Natural killer cell (primary cell): ENCODE measurements at regions of chr19 and their contacts with region 1.

Region 1: DNA sequence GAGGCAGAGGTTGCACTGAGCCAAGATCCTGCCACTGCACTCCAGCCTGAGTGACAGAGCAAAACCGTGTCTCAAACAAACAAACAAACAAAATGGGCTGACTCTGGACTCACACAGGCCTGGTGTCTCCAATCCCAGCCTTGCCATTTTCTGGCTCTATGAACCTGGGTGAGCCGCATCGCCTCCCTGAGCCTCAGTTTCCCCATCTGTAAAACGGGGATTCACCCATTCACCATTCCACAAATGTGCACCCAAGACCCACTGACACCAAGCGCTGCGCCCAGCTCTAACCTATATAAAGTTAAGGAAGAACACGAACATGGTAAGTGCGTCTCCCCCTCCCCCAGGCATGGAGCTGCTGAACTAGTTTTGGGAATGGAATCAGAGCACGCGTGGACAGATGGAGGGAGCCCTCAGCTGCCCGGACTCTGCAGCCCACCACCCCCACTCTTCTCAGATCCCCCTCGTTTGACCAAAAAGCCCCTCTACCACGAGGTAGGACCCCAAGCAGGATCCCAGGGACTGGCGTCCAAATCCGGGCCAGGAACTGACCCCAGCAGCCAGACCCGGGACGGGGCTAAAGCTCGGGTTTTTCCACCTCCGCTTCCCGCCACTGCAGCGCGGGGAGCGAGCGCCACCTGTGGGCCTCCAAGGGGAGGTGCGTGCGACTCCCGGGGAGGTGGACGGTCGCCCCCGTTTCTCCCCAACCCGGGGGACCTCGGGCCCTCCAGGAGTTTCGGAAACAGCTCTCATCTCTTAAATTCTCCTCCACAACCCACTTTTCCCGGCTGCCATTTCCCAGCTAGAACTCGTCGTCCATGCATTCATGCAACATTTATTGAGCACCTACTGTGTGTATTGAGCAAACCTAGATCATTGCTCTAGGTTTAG is 33.0 kb upstream of the ADGRE5 start:
- DNase-seq: peak; percentile 76 to 80
- ATAC-seq: peak; percentile 82 to 95 (median 93)
- H3K4me3 ChIP-seq: peak overlapping the region; percentile 7
- H3K4me3 Mint-ChIP-seq: peak overlapping the region; percentile 82
- H3K27ac ChIP-seq: no peak overlapping the region
- H3K27ac Mint-ChIP-seq: peak overlapping the region in 1 of 2 donors; percentile 72
- H3K4me1 ChIP-seq: peaks cover 29% of the 10 kb centered on the region
- H3K4me1 Mint-ChIP-seq: peaks cover 16 to 29% of the 10 kb centered on the region in 2 donors
- H3K27me3 ChIP-seq: no peaks in the 10 kb centered on the region
- H3K27me3 Mint-ChIP-seq: no peaks in the 10 kb centered on the region
- CTCF ChIP-seq: peak; percentile 97

Region 2: GRCh38 chr19:14147797-14148605 is 200.2 kb before region 1 on chr19:
- intact Hi-C with region 1: loop called (anchors 1 kb)
- DNase-seq: peak; percentile 71 to 73
- ATAC-seq: peak; percentile 84 to 91 (median 86)
- H3K4me3 ChIP-seq: no peak overlapping the region
- H3K4me3 Mint-ChIP-seq: peak overlapping the region; percentile 81
- H3K27ac ChIP-seq: peak overlapping the region; percentile 87
- H3K27ac Mint-ChIP-seq: peak overlapping the region; percentile 92 to 97
- H3K4me1 ChIP-seq: peaks cover 31% of the 10 kb centered on the region
- H3K4me1 Mint-ChIP-seq: peaks cover 23 to 37% of the 10 kb centered on the region in 2 donors
- H3K27me3 ChIP-seq: no peaks in the 10 kb centered on the region
- H3K27me3 Mint-ChIP-seq: no peaks in the 10 kb centered on the region
- CTCF ChIP-seq: peak; percentile 87

Region 3: DNA sequence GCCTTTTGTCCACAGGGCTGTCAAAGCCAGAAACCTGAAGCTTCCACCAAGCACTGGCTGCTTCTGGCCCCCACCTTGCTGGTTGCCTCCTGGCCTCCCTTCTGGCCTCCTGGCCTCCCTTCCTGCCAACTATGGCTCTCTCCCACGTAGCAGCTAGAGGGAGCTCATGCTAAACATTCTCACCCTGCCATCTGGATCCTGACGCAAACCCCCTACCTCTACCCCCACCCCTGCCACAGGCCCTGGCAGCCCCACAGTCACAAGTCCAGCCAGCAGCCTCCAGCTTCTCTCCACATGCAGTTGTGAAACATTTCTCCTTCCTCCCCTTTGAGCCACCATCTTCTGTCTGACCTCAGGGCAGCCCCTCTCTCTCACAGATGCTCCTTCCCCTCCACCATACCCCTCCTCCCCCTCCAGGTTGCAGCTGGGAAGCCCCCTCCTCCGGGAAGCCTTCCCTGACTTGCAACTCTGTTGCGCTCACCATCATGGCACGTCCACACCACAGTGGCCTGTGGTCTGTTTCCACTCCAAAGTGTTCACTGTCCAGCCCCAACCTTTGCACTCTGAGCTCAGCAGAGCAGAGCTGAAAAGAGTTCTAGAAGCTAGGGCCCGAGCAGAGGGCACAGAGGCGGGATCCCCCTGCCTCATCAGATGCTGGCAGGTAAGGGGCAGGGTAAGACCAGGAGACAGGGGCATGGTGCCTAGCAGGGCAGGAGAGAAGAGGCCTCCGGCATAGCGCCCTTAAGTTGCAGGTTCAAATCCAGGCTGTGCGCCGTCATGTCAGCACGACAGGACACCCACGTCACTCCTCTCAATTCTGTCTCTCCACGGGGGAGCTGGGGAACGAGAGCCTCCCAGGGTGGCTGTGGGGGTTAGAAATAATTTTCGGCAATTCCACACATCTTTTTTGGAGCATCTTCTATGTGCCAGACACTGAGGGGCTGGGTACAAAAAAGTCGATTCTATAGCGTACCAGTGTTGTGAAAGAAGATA is 149.6 kb before region 1 on chr19:
- intact Hi-C with region 1: loop called (anchors 1 kb)
- DNase-seq: no peak
- ATAC-seq: no peak
- H3K4me3 ChIP-seq: no peak overlapping the region
- H3K4me3 Mint-ChIP-seq: no peak overlapping the region
- H3K27ac ChIP-seq: no peak overlapping the region
- H3K27ac Mint-ChIP-seq: peak overlapping the region in 1 of 2 donors; percentile 33
- H3K4me1 ChIP-seq: peaks cover 26% of the 10 kb centered on the region
- H3K4me1 Mint-ChIP-seq: peaks cover 21 to 65% of the 10 kb centered on the region in 2 donors
- H3K27me3 ChIP-seq: no peaks in the 10 kb centered on the region
- H3K27me3 Mint-ChIP-seq: no peaks in the 10 kb centered on the region
- CTCF ChIP-seq: no peak

Region 4: GRCh38 chr19:14318873-14319272 is 29.4 kb before region 1 on chr19:
- intact Hi-C with region 1: no loop called
- DNase-seq: no peak
- ATAC-seq: peak in 2 of 3 donors; percentile 35 to 43
- H3K4me3 ChIP-seq: no peak overlapping the region
- H3K4me3 Mint-ChIP-seq: no peak overlapping the region
- H3K27ac ChIP-seq: no peak overlapping the region
- H3K27ac Mint-ChIP-seq: no peak overlapping the region
- H3K4me1 ChIP-seq: no peaks in the 10 kb centered on the region
- H3K4me1 Mint-ChIP-seq: no peaks in the 10 kb centered on the region
- H3K27me3 ChIP-seq: no peaks in the 10 kb centered on the region
- H3K27me3 Mint-ChIP-seq: no peaks in the 10 kb centered on the region
- CTCF ChIP-seq: no peak

Region 5: DNA sequence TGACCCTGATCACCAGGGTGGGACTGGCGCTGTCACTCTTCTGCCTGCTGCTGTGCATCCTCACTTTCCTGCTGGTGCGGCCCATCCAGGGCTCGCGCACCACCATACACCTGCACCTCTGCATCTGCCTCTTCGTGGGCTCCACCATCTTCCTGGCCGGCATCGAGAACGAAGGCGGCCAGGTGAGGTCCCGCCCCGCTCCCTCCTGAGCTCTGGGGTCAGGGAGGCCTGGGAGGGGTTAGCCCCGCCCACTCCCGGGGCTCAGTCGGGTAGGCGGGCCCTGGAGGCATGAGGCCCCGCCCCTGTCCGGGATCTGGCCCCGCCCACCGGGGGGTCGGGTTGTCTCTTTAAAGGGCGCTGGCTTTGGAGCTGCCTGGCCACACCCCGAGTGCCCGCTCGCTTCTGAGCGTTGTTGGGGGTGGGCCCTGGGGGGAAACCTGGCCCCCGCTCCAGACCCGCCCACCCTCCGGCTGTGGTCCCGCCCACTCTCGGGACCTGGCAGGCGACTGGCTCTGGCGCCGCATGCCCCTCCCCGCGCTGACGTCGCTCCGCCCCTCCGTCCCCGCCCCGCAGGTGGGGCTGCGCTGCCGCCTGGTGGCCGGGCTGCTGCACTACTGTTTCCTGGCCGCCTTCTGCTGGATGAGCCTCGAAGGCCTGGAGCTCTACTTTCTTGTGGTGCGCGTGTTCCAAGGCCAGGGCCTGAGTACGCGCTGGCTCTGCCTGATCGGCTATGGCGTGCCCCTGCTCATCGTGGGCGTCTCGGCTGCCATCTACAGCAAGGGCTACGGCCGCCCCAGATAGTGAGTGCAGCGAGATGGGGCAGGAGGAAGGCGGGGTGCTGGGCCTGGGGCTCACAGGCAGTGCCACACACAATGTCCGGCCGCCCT is 57.8 kb after region 1 on chr19:
- intact Hi-C with region 1: no loop called
- DNase-seq: peak; percentile 92 to 94
- ATAC-seq: peak; percentile 64 to 86 (median 71)
- H3K4me3 ChIP-seq: no peak overlapping the region
- H3K4me3 Mint-ChIP-seq: peak overlapping the region; percentile 82
- H3K27ac ChIP-seq: peak overlapping the region; percentile 65
- H3K27ac Mint-ChIP-seq: peak overlapping the region; percentile 92
- H3K4me1 ChIP-seq: peaks cover 59% of the 10 kb centered on the region
- H3K4me1 Mint-ChIP-seq: peaks cover 45 to 71% of the 10 kb centered on the region in 2 donors
- H3K27me3 ChIP-seq: no peaks in the 10 kb centered on the region
- H3K27me3 Mint-ChIP-seq: no peaks in the 10 kb centered on the region
- CTCF ChIP-seq: peak; percentile 98

Region 6: DNA sequence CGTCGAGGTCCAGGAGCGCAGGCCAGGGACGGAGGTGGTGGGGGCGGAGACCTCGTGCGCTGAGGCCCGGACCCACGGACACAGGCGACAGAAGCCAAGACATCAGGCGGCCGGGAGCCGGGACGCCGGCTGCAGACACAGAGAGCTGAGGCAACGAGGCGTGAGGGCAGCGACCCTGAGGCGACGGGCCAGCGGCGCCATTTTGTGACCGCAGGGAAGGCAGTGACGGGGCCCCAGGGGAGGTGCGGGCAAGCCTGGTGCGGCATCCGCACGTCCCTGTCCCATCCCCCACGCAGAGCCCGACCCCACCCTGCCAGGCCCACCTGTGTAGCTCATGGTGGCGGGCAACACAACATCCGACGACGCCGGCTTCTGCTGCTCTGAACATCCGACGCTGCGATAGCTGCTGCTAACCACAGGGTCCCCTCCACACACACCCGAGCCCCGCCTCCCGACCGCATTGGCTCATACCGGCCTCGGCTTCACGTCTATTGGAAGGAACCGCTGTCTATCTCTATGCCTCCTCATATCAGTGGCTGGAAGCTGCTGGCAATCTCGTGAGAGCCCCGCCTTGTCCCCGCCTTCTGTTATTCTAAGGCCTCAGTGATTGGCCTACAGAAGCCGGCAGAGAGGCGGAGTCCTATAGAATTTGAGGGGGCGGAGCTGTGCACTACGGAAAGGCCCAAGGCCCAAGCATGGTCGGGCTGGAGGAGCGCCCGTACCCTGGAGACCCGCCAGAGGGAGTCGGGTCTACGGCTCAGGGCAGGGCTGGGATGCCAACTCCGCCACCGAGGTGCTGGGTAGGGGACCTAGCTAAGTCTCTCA is 1070.6 kb after region 1 on chr19 and contains the start of gene AKAP8L:
- intact Hi-C with region 1: no loop called
- DNase-seq: peak; percentile 99
- ATAC-seq: peak; percentile 91 to 98 (median 93)
- H3K4me3 ChIP-seq: peak within 1 kb of the TSS; percentile 86
- H3K4me3 Mint-ChIP-seq: peak within 1 kb of the TSS; percentile 95
- H3K27ac ChIP-seq: peak within 1 kb of the TSS; percentile 50
- H3K27ac Mint-ChIP-seq: peak within 1 kb of the TSS; percentile 91 to 98
- H3K4me1 ChIP-seq: peaks cover 25% of the 10 kb centered on the region
- H3K4me1 Mint-ChIP-seq: peaks cover 42 to 45% of the 10 kb centered on the region in 2 donors
- H3K27me3 ChIP-seq: no peaks in the 10 kb centered on the region
- H3K27me3 Mint-ChIP-seq: no peaks in the 10 kb centered on the region
- CTCF ChIP-seq: peak; percentile 81
- total RNA-seq, gene AKAP8L: 144 to 174 (median 173) TPM